A549 (cell line): ENCODE measurements at regions of chr20 and their contacts with region 1.

Region 1: DNA sequence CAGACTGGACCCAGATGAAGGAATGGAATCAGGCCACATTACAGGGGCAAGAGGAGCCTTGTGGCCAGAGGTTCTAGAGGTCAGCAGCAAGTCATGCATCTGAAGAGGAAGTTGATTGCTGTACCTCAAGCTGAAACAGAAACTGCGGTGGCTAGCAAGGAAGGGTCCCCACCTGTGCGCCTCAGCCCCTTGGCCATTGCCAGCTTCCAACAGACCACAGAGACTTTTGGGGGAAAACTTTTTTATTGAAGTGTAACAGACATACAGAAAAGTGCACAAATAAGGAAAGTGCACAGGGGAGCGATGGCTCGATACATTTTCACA is 26.8 kb upstream of the SLC9A8 start:
- DNase-seq: no peak
- ATAC-seq: no peak
- H3K4me3 ChIP-seq: no peak overlapping the region
- H3K27ac ChIP-seq: peak overlapping the region; percentile 51 to 84; a peak in 5 of 6 replicates
- H3K4me1 ChIP-seq: peaks cover 39% of the 10 kb centered on the region
- CTCF ChIP-seq: no peak
- EP300 ChIP-seq: no peak
- POLR2A ChIP-seq: no peak
- RAD21 ChIP-seq: no peak

Region 2: DNA sequence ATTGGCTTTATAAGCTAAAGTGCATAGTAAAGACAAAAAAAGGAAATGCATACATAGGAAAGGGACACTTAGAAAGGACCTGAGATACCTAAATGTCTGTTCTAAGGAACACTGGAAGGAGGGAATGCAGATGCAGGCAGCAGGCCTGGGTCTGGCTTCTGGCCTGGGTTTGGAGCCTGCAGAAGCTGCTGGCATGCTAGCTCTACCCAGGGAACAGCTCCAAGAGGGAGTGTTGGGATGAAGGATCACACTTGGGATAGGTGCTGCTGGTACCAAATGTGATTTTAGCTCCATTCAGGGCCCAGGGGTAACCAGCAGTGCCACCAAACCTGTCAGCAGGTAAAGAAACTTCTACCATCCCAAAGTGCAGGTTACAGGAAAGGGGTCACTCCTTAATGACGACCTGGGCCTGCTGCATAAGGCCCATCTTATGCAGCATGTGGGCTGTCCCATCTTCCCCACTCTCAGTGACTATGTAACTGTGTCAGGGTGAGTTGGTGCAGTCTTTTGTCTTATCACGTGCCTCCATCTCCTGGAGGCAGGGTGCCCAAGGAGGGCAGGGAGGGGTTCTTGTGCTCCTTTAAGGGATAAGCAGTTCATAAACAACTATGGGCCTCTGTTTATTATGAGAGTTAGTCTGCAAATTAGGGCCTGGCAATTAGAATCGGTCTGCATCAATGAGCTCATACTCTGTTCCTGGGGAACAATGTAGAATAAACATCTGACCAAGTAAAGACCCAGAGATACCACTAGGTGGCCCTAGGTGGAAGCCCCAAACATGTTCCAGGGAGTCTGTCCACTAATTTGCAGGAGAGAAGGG is 539.7 kb before region 1 on chr20:
- CTCF ChIA-PET with region 1: no interaction called
- POLR2A ChIA-PET with region 1: no interaction called
- DNase-seq: peak; percentile 53 to 73
- ATAC-seq: peak; percentile 80 to 88
- H3K4me3 ChIP-seq: no peak overlapping the region
- H3K27ac ChIP-seq: no peak overlapping the region
- H3K4me1 ChIP-seq: no peaks in the 10 kb centered on the region
- CTCF ChIP-seq: peak; percentile 59
- EP300 ChIP-seq: no peak
- POLR2A ChIP-seq: no peak
- RAD21 ChIP-seq: peak; percentile 27 to 47; a peak in 3 of 5 replicates

Region 3: GRCh38 chr20:49768204-49769047 is 17.4 kb before region 1 on chr20:
- CTCF ChIA-PET with region 1: interaction called, 7 read pairs
- POLR2A ChIA-PET with region 1: interaction called, 16 read pairs
- DNase-seq: peak; percentile 66 to 98
- ATAC-seq: peak; percentile 82
- H3K4me3 ChIP-seq: no peak overlapping the region
- H3K27ac ChIP-seq: peak overlapping the region; percentile 94
- H3K4me1 ChIP-seq: peaks cover 82% of the 10 kb centered on the region
- CTCF ChIP-seq: no peak
- EP300 ChIP-seq: peak; percentile 95 to 99
- POLR2A ChIP-seq: no peak
- RAD21 ChIP-seq: peak; percentile 26 to 66; a peak in 4 of 5 replicates

Region 4: GRCh38 chr20:49775229-49775693 is 10.6 kb before region 1 on chr20:
- CTCF ChIA-PET with region 1: interaction called, 28 read pairs
- POLR2A ChIA-PET with region 1: interaction called, 7 read pairs
- DNase-seq: peak; percentile 78 to 90
- ATAC-seq: peak; percentile 63 to 70
- H3K4me3 ChIP-seq: no peak overlapping the region
- H3K27ac ChIP-seq: peak overlapping the region; percentile 94
- H3K4me1 ChIP-seq: peaks cover 68% of the 10 kb centered on the region
- CTCF ChIP-seq: no peak
- EP300 ChIP-seq: peak; percentile 72 to 85; a peak in 3 of 5 replicates
- POLR2A ChIP-seq: no peak
- RAD21 ChIP-seq: no peak; a peak in 2 of 5 replicates

Region 5: DNA sequence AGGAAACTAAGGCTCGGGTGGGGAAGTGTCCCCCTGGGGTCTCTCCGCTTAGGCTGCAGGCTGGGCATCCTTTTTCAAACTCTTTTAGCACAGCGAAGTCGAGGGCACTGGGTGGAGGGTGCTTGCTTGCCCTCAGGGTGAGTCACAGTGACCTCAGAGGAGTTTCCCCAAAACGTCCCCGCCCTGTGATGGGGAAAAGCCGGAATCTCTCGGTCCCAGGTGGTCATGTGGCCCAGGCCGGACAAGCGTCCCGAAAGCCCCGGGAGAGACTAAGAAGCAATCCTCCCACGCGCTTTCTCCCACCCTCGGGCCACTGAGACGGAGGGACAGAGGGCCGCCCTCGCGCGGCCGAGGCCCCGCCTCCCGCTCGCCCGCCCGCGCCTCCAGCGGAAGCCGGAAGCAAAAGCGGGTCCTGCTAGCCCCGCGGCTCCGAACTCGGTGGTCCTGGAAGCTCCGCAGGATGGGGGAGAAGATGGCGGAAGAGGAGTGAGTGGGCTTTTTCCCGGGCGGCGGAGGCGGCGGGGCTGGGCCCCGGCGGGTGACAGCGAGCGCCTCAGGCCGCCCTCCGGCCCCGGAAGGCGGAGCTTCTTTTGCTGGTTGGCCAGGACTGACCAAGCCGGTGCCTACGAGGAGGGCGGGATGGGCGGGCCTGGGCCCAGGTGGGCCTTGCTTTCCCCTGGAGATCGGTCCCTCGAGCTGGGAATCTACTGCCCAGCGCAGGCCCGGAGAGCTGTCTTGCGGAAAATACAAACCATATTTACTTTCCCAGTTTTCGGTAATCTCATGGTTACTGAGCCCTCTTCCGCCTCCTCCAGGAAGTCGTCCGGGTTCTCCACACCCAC is 26.9 kb after region 1 on chr20 and contains the start of gene SLC9A8:
- CTCF ChIA-PET with region 1: no interaction called
- POLR2A ChIA-PET with region 1: interaction called, 15 read pairs
- DNase-seq: peak; percentile 83 to 90
- ATAC-seq: peak; percentile 93 to 94
- H3K4me3 ChIP-seq: peak within 1 kb of the TSS; percentile 86
- H3K27ac ChIP-seq: peak within 1 kb of the TSS; percentile 96 to 99
- H3K4me1 ChIP-seq: peaks cover 19% of the 10 kb centered on the region
- CTCF ChIP-seq: no peak
- EP300 ChIP-seq: no peak
- POLR2A ChIP-seq: peak; percentile 61
- RAD21 ChIP-seq: peak in 1 of 2 experiments; percentile 11; a peak in 2 of 5 replicates
- polyA plus RNA-seq, gene SLC9A8: 5.0 and 7.4 TPM in 2 replicates